ENCODE measurements at regions of chr11 and their contacts with region 1.

Region 1: GRCh38 chr11:67239783-67240575 is 26.3 kb upstream of the GRK2 start:
- H3K4me3 ChIP-seq: peak overlapping the region; percentile 61
- H3K27ac ChIP-seq: peak overlapping the region; percentile 26; the same call in 1 of the 2 replicates
- H3K4me1 ChIP-seq: peaks cover 5% of the 10 kb centered on the region; the same call in 1 of the 2 replicates
- CTCF ChIP-seq: no peak

Region 2: DNA sequence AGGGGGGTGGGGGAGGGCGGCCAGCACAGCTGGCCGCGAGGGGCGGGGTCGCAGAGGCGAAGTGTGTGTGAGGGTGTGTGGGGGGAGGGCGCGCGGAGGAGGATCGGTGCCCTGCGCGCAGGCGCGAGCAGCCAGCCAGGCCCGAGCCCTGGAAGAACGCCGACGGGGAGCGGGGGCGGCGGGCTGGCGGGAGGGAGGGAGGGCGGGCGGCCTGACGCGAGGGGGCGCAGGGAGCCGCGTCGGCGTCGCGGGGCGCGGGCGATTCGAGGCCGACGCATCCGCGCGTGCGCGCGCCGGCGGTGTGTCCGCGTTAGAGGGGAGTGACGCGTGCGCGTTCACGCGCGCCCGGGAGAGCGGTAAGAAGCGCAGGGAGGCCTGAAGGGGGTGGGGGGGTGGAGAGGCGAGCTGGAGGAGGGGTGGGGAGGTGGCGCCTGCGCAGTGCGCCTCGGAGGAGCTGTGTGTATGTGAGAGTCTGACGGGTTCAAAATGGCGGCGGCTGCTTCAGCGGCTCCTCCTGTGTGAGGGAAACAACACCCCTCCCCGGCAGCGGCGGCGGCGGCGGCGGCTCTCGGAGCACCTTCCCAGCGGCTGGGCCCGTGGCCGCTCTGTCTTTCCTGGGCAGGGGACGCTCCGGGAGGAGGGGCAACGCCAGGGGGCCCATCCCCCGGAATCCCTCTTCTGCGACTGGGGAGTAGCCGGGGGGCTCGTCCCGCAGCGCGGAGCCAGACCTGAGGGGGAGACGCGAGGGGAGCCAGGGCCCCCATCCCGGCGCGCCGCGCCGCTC is 121.0 kb before region 1 on chr11 and contains the start of gene KDM2A:
- CTCF ChIA-PET with region 1: no interaction called
- POLR2A ChIA-PET with region 1: interaction called, 19 read pairs
- H3K4me3 ChIP-seq: peak within 1 kb of the TSS; percentile 87
- H3K27ac ChIP-seq: peak within 1 kb of the TSS; percentile 97
- H3K4me1 ChIP-seq: no peaks in the 10 kb centered on the region; the same call in 1 of the 2 replicates
- CTCF ChIP-seq: no peak